Tibial artery (tissue), 4 donors: ENCODE measurements at regions of chr11 and their contacts with region 1.

Region 1: GRCh38 chr11:113305440-113306336 is 8.7 kb upstream of the TTC12 start:
- DNase-seq: peak; percentile 70 to 85
- H3K4me3 ChIP-seq: no peak overlapping the region
- H3K27ac ChIP-seq: no peak overlapping the region
- H3K4me1 ChIP-seq: peaks cover 0 to 6% (median 1%) of the 10 kb centered on the region in 4 donors
- H3K27me3 ChIP-seq: no peaks in the 10 kb centered on the region
- CTCF ChIP-seq: peak; percentile 88 to 96

Region 2: GRCh38 chr11:113532697-113533424 is 227.2 kb after region 1 on chr11:
- intact Hi-C with region 1: loop called (anchors 5 kb)
- DNase-seq: peak; percentile 73 to 78
- H3K4me3 ChIP-seq: no peak overlapping the region
- H3K27ac ChIP-seq: no peak overlapping the region
- H3K4me1 ChIP-seq: peaks cover 0 to 26% (median 7%) of the 10 kb centered on the region in 4 donors
- H3K27me3 ChIP-seq: peaks cover 0 to 4% of the 10 kb centered on the region in 2 donors
- CTCF ChIP-seq: peak; percentile 65 to 79

Region 3: GRCh38 chr11:113730887-113731726 is 425.4 kb after region 1 on chr11:
- intact Hi-C with region 1: loop called (anchors 2 kb)
- DNase-seq: no peak
- H3K4me3 ChIP-seq: no peak overlapping the region
- H3K27ac ChIP-seq: no peak overlapping the region
- H3K4me1 ChIP-seq: peaks cover 0 to 8% (median 0%) of the 10 kb centered on the region in 4 donors
- H3K27me3 ChIP-seq: no peaks in the 10 kb centered on the region
- CTCF ChIP-seq: peak; percentile 49 to 76

Region 4: DNA sequence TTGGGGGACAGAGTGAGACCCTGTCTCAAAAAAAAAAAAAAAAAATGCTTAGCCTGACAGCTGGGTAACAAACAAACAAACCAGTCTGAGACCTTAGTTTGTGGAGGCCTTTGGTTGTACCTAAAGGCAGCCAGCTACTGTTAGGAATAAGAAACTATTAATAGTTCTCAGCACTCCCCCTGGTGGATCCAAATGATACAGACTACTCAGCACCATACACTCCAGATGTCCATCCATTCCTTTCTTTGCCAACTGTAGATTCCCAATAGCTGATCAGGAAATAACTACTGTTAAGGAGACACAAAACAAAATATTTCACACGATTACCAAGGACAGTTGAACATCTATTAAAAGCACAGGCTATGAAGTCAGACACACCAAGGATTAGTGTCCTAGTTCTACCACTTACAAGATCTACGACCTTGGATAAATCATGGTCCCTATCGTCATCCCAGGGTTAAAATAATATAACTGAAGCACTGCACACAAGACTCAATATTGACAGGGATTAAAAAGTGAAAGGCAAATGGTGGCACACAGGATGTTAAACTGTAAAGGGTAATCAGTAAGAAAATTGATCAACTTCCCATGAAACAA is 491.1 kb after region 1 on chr11:
- intact Hi-C with region 1: loop called (anchors 10 kb)
- DNase-seq: no peak
- H3K4me3 ChIP-seq: no peak overlapping the region
- H3K27ac ChIP-seq: no peak overlapping the region
- H3K4me1 ChIP-seq: no peaks in the 10 kb centered on the region
- H3K27me3 ChIP-seq: no peaks in the 10 kb centered on the region
- CTCF ChIP-seq: peak; percentile 64 to 72